ENCODE measurements at regions of chr10 and their contacts with region 1.

Region 1: DNA sequence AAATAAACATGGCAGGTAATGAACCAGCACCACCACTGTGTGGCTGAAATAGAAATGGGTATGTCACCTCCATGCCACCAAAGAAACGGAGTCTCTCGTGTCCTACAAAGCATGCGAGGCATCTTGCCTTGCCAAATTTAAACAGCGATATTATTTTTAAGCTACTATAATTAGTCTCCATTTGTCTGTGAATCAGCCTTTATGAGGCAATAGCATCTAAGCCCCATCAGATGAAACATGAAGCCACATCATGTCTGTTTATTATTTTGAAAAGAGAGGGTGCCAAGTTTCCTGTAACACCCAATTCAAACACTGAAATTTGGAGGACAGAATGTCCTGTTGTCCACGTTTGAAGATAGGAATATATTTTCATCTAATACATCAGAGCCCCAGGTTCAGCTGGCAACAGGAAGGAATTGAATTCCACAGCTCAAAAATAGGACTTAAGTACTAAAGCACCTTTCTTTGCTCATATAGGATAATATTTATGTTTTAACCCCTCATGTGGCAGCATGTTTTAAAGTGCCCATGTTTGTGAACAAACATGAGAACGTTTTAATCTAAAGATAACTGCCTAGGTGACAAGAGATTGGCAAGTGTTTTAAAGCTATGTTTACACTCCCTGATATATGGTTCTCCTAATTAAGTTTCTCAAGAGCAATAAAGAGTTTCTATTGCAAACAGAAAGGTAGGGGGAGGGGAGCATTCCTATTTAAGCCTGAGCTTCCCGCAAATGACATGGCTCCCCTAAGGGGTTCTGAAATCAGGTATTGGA is 86.8 kb downstream of the SORBS1 start:
- DNase-seq: no peak

Region 2: GRCh38 chr10:95513941-95514392 is 39.6 kb after region 1 on chr10:
- intact Hi-C with region 1: loop called (anchors 5 kb)
- DNase-seq: peak; percentile 42 to 90 (median 55)